CD4-positive, alpha-beta T cell (primary cell): ENCODE measurements at regions of chrX and their contacts with region 1.

Region 1: GRCh38 chrX:130902783-130903613 is at the start of gene ENOX2:
- DNase-seq: peak; percentile 59 to 93 (median 71)
- ATAC-seq: peak; percentile 95
- H3K4me3 ChIP-seq: peak within 1 kb of the TSS; percentile 93
- H3K4me3 Mint-ChIP-seq: no peak within 1 kb of the TSS
- H3K27ac ChIP-seq: peak within 1 kb of the TSS; percentile 74 to 82
- H3K27ac Mint-ChIP-seq: peak within 1 kb of the TSS; percentile 76
- H3K4me1 ChIP-seq: peaks cover 8% of the 10 kb centered on the region
- H3K4me1 Mint-ChIP-seq: peaks cover 14% of the 10 kb centered on the region
- H3K27me3 ChIP-seq: no peaks in the 10 kb centered on the region
- H3K27me3 Mint-ChIP-seq: no peaks in the 10 kb centered on the region
- CTCF ChIP-seq: no peak
- total RNA-seq, gene ENOX2: 4.0 to 6.5 TPM

Region 2: GRCh38 chrX:130401415-130402207 is 501.4 kb before region 1 on chrX and contains the start of gene RBMX2:
- CTCF ChIA-PET with region 1: no interaction called
- POLR2A ChIA-PET with region 1: interaction called, 3 read pairs
- intact Hi-C with region 1: loop called in 1 of 2 experiments (anchors 5 kb)
- DNase-seq: peak; percentile 38 to 90 (median 62)
- ATAC-seq: peak; percentile 89
- H3K4me3 ChIP-seq: peak within 1 kb of the TSS; percentile 84
- H3K4me3 Mint-ChIP-seq: peak within 1 kb of the TSS; percentile 93
- H3K27ac ChIP-seq: peak within 1 kb of the TSS; percentile 73 to 74
- H3K27ac Mint-ChIP-seq: peak within 1 kb of the TSS; percentile 88
- H3K4me1 ChIP-seq: peaks cover 14% of the 10 kb centered on the region
- H3K4me1 Mint-ChIP-seq: peaks cover 28% of the 10 kb centered on the region
- H3K27me3 ChIP-seq: no peaks in the 10 kb centered on the region
- H3K27me3 Mint-ChIP-seq: peaks cover 8% of the 10 kb centered on the region
- CTCF ChIP-seq: no peak
- total RNA-seq, gene RBMX2: 20.5 to 21.5 TPM

Region 3: GRCh38 chrX:132226169-132226568 is 1323.2 kb after region 1 on chrX:
- CTCF ChIA-PET with region 1: no interaction called
- POLR2A ChIA-PET with region 1: no interaction called
- intact Hi-C with region 1: loop called in 1 of 2 experiments (anchors 10 kb)
- DNase-seq: peak in 2 of 14 experiments; percentile 10 to 13
- ATAC-seq: no peak
- H3K4me3 ChIP-seq: no peak overlapping the region
- H3K4me3 Mint-ChIP-seq: no peak overlapping the region
- H3K27ac ChIP-seq: no peak overlapping the region
- H3K27ac Mint-ChIP-seq: no peak overlapping the region
- H3K4me1 ChIP-seq: no peaks in the 10 kb centered on the region
- H3K4me1 Mint-ChIP-seq: peaks cover 7% of the 10 kb centered on the region
- H3K27me3 ChIP-seq: no peaks in the 10 kb centered on the region
- H3K27me3 Mint-ChIP-seq: no peaks in the 10 kb centered on the region
- CTCF ChIP-seq: peak; percentile 13